Dendritic cell treated with granulocyte-macrophage colony-stimulating factor and Interleukin-4, amounts not matched to agents 40 ng/mL and 50 ng/mL, for 4 days (primary cell): ENCODE measurements at regions of chr2 and their contacts with region 1.

Region 1: GRCh38 chr2:63861220-63861822 is 19.6 kb downstream of the UGP2 start:
- H3K4me3 Mint-ChIP-seq: no peak overlapping the region
- H3K27ac Mint-ChIP-seq: no peak overlapping the region
- H3K4me1 Mint-ChIP-seq: peaks cover 16% of the 10 kb centered on the region
- H3K27me3 Mint-ChIP-seq: no peaks in the 10 kb centered on the region

Region 2: DNA sequence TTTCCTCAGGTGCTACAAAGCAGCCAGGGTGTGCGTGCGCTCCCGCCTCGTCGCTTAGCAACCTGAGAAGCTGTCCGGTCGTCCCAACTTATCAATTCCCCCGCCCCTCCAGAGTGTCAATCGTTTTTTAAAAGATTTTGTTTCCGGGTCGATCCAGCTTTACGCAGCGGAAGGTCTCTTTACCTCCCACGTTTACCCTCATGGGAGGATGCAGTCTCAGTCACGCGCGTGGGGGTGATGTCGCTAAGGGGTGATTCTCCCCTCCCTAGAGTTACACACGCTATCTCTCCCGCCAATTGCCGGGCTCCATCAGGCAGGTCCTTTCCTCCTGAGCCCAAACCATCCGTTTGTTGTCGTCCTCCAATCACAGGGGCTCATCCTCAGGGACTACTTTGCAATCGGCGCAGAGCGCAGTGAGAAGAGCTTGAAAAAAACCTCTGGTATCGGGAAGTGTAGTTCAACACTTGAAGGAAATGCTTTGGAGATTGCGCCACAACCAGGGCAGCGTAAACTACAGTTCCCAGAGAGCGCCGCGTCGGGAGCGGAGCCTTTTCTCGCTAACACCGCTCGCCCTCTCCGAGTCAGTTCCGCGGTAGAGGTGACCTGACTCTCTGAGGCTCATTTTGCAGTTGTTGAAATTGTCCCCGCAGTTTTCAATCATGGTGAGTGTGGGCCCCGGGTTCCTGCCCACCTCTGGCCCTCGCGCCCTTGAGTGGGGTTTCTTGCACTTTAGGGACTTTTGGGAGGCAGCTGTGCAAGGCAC is 272.8 kb before region 1 on chr2 and contains the starts of genes MDH1 and WDPCP:
- intact Hi-C with region 1: loop called (anchors 5 kb)
- H3K4me3 Mint-ChIP-seq: peak within 1 kb of the TSS; percentile 99
- H3K27ac Mint-ChIP-seq: peak within 1 kb of the TSS; percentile 97
- H3K4me1 Mint-ChIP-seq: peaks cover 42% of the 10 kb centered on the region
- H3K27me3 Mint-ChIP-seq: no peaks in the 10 kb centered on the region

Region 3: DNA sequence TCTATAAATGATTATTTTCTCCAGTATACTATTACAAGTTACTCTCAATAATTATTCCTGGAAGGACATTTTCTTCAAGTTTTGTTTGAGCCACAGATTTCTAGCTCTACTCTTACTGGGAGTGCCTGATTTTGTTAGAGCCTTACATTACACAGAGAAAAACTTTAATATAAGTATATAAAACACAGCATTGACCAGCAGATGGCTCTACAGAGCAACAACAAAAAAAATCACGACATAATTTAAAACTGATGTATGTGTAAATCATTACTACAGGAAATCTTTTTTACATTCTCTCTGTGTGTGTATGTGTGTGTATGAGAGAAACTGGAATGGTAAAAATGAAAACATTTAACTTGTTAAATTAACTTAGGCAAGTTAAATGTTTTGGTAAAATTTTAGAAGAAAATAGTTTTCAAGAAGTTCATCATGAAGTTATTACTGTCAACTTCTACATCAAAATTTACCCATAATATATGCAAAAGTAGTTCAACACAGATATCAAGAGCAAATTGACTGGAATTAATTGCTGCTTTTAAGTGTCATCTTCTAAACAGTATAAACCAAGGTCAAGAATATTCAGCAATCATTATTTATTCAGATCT is 169.2 kb before region 1 on chr2:
- intact Hi-C with region 1: loop called (anchors 1 kb)
- H3K4me3 Mint-ChIP-seq: no peak overlapping the region
- H3K27ac Mint-ChIP-seq: no peak overlapping the region
- H3K4me1 Mint-ChIP-seq: no peaks in the 10 kb centered on the region
- H3K27me3 Mint-ChIP-seq: no peaks in the 10 kb centered on the region

Region 4: DNA sequence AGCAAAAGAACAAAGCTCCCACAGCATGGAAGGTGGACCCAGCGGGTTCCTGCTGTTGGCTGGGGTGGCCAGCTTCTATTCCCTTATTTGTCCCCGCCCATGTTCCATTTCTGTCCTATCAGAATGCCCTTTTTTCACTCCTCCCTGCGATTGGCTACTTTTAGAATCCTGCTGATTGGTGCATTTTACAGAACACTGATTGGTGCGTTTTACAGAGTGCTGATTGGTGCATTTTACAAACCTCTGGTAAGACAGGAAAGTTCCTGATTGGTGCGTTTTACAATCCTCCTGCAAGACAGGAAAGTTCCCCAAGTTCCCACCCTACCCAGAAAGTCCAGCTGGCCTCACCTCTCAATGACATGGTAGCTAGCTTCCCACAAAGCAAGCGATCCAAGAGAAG is 59.9 kb before region 1 on chr2:
- intact Hi-C with region 1: no loop called
- H3K4me3 Mint-ChIP-seq: no peak overlapping the region
- H3K27ac Mint-ChIP-seq: no peak overlapping the region
- H3K4me1 Mint-ChIP-seq: no peaks in the 10 kb centered on the region
- H3K27me3 Mint-ChIP-seq: no peaks in the 10 kb centered on the region